Activated CD4-positive, alpha-beta T cell treated with anti-CD3 and anti-CD28 coated beads, Interleukin-2, amount 10 ng/mL, durations not matched to agents 7 days and 5 days (primary cell): ENCODE measurements at regions of chr7 and their contacts with region 1.

Region 1: DNA sequence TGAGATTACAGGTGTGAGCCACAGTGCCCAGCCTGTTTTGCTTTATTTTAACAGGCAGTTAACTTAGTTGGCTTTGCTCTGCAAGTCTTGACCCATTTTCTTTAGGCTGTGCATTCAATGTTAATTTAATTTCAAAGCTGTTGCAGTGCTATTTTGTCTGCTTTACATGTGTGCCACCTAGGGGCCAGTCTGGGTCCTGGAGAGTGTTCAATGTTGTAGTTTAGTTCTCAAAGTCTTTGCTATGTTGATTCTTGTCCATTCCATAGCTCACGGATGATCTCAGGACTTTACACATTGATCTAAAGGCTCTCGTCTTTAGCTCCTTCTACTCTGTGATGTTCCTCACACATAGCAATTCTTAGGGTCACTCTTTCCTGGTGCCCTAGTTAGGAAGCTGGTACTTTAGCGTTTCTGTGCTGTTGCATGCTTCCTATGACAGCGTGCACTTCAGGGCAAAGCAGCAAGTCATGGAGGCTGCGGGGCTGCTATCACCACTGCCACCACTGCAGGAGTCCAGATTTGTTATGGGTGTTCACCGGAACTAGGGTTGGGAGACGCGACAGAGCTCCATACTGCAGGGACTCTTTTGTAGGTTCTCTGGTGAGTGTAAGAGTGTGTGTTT is 16.4 kb upstream of the ABCA13 start:
- DNase-seq: peak; percentile 40
- H3K4me3 Mint-ChIP-seq: no peak overlapping the region
- H3K27ac Mint-ChIP-seq: no peak overlapping the region
- H3K4me1 Mint-ChIP-seq: no peaks in the 10 kb centered on the region
- H3K27me3 Mint-ChIP-seq: peaks cover 15% of the 10 kb centered on the region

Region 2: GRCh38 chr7:47945261-47946001 is 209.5 kb before region 1 on chr7:
- CTCF ChIA-PET with region 1: interaction called, 12 read pairs
- POLR2A ChIA-PET with region 1: no interaction called
- DNase-seq: peak; percentile 80
- H3K4me3 Mint-ChIP-seq: no peak overlapping the region
- H3K27ac Mint-ChIP-seq: no peak overlapping the region
- H3K4me1 Mint-ChIP-seq: no peaks in the 10 kb centered on the region
- H3K27me3 Mint-ChIP-seq: no peaks in the 10 kb centered on the region

Region 3: DNA sequence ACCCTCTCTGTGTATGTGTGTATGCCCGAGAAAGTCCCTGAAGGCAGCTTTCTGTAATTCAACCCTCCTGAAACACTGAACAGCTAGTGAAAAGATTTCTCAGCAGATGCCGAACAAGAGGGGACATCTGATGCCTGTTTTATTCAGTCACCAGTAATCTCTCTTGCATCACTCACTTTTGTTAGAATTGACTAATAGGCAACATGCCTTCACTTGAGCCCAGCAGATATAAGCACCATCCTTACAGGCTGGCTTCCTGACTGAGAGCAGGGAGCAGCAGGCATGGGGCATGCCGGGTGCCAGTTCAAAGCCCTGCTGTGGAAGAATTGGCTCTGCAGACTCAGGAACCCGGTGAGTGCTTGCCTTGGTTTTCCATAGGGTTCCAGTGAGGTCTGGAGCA is 16.3 kb after region 1 on chr7 and contains the start of gene ABCA13:
- CTCF ChIA-PET with region 1: no interaction called
- POLR2A ChIA-PET with region 1: no interaction called
- DNase-seq: no peak
- H3K4me3 Mint-ChIP-seq: no peak within 1 kb of the TSS
- H3K27ac Mint-ChIP-seq: no peak within 1 kb of the TSS
- H3K4me1 Mint-ChIP-seq: no peaks in the 10 kb centered on the region
- H3K27me3 Mint-ChIP-seq: peaks cover 14% of the 10 kb centered on the region
- total RNA-seq, gene ABCA13: 0.07 to 0.19 TPM

Region 4: DNA sequence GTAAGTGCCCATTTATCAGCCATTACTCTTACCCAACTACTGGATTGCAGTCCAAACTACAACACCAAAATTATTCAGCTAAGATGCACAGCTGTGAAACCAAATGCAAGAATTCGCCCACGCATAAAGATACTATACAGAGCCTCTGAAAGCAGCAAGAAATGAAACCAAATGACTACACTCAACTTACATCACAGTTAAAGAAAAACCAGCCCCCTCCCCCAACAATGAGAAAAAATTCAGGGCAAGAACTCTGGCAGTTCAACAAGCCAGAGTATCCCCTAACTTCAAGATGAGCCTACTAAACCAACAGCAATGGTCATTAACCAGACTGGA is 1409.4 kb after region 1 on chr7:
- CTCF ChIA-PET with region 1: no interaction called
- POLR2A ChIA-PET with region 1: no interaction called
- DNase-seq: no peak
- H3K4me3 Mint-ChIP-seq: no peak overlapping the region
- H3K27ac Mint-ChIP-seq: no peak overlapping the region
- H3K4me1 Mint-ChIP-seq: no peaks in the 10 kb centered on the region
- H3K27me3 Mint-ChIP-seq: no peaks in the 10 kb centered on the region